Caco-2 (cell line): ENCODE measurements at regions of chr10 and their contacts with region 1.

Region 1: GRCh38 chr10:3740157-3740871 is 44.7 kb downstream of the KLF6 start:
- DNase-seq: peak; percentile 77 to 81
- H3K4me3 ChIP-seq: no peak overlapping the region
- H3K4me3 Mint-ChIP-seq: peak overlapping the region; percentile 44
- H3K27ac Mint-ChIP-seq: peak overlapping the region; percentile 77
- H3K4me1 ChIP-seq: peaks cover 47% of the 10 kb centered on the region
- H3K4me1 Mint-ChIP-seq: peaks cover 47% of the 10 kb centered on the region
- H3K27me3 ChIP-seq: no peaks in the 10 kb centered on the region
- H3K27me3 Mint-ChIP-seq: no peaks in the 10 kb centered on the region
- CTCF ChIP-seq: no peak

Region 2: DNA sequence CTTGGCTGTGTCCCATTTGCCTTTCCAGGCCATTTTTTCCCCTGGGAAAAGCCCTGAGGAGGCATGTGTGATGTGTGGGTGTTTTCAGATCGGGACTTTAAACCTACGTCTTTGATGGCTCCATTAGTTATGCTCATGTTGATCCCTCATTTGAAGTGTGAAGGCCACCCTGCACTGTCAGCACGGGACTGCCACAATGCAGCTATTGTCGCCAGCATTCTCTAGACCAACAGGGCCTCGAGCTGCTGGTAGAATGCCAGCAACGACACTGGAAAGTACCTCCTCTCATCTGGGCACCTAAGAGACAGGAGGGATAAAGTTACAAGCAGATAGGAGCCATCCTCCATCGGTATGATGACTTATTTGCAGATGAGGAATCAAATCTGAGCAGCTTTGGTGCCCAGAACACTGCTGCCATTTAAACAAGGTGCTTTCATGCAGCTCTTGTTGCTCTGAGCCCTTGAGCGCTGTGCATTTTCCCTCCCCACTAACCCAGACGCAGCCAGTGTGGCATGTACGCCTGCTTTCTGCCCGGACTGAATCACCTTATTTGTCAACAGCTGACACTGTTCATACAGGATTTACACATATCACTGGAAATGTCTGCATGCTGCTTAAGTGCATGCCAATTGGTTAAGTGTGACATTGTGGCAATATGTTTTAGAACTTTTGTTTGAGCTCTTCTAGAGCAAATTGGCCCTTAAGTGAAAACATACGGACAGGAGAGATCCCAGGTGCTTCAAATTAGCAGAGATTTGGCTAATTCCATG is 392.7 kb before region 1 on chr10:
- CTCF ChIA-PET with region 1: no interaction called
- POLR2A ChIA-PET with region 1: interaction called, 11 read pairs
- intact Hi-C with region 1: no loop called
- DNase-seq: no peak
- H3K4me3 ChIP-seq: no peak overlapping the region
- H3K4me3 Mint-ChIP-seq: no peak overlapping the region
- H3K27ac Mint-ChIP-seq: no peak overlapping the region
- H3K4me1 ChIP-seq: no peaks in the 10 kb centered on the region
- H3K4me1 Mint-ChIP-seq: peaks cover 6% of the 10 kb centered on the region
- H3K27me3 ChIP-seq: no peaks in the 10 kb centered on the region
- H3K27me3 Mint-ChIP-seq: peaks cover 11% of the 10 kb centered on the region
- CTCF ChIP-seq: no peak

Region 3: DNA sequence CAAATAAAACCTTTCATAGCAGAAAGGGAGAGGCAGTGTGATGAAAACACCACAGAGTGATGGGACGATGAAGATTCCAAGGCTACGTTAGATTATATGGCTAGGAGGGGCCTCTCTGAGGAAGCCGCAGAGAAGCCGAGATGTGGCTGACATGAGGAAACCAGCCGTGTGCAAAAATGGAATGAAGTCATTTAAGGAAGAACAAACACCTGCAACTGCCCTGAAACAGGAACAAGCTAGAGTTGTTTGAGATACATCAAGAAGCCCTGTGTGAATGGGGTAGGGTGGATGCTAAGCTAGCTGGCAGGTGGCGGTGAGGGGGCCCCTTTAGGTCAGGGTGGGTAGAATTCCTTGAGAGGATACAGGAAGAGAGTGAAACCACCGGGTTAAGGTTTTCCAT is 84.8 kb before region 1 on chr10:
- CTCF ChIA-PET with region 1: no interaction called
- POLR2A ChIA-PET with region 1: no interaction called
- intact Hi-C with region 1: loop called (anchors 1 kb)
- DNase-seq: no peak
- H3K4me3 ChIP-seq: no peak overlapping the region
- H3K4me3 Mint-ChIP-seq: no peak overlapping the region
- H3K27ac Mint-ChIP-seq: peak overlapping the region; percentile 7
- H3K4me1 ChIP-seq: peaks cover 22% of the 10 kb centered on the region
- H3K4me1 Mint-ChIP-seq: peaks cover 32% of the 10 kb centered on the region
- H3K27me3 ChIP-seq: no peaks in the 10 kb centered on the region
- H3K27me3 Mint-ChIP-seq: no peaks in the 10 kb centered on the region
- CTCF ChIP-seq: no peak

Region 4: GRCh38 chr10:3676564-3676963 is 63.8 kb before region 1 on chr10:
- CTCF ChIA-PET with region 1: no interaction called
- POLR2A ChIA-PET with region 1: no interaction called
- intact Hi-C with region 1: no loop called
- DNase-seq: no peak
- H3K4me3 ChIP-seq: no peak overlapping the region
- H3K4me3 Mint-ChIP-seq: no peak overlapping the region
- H3K27ac Mint-ChIP-seq: no peak overlapping the region
- H3K4me1 ChIP-seq: no peaks in the 10 kb centered on the region
- H3K4me1 Mint-ChIP-seq: peaks cover 4% of the 10 kb centered on the region
- H3K27me3 ChIP-seq: no peaks in the 10 kb centered on the region
- H3K27me3 Mint-ChIP-seq: no peaks in the 10 kb centered on the region
- CTCF ChIP-seq: no peak

Region 5: DNA sequence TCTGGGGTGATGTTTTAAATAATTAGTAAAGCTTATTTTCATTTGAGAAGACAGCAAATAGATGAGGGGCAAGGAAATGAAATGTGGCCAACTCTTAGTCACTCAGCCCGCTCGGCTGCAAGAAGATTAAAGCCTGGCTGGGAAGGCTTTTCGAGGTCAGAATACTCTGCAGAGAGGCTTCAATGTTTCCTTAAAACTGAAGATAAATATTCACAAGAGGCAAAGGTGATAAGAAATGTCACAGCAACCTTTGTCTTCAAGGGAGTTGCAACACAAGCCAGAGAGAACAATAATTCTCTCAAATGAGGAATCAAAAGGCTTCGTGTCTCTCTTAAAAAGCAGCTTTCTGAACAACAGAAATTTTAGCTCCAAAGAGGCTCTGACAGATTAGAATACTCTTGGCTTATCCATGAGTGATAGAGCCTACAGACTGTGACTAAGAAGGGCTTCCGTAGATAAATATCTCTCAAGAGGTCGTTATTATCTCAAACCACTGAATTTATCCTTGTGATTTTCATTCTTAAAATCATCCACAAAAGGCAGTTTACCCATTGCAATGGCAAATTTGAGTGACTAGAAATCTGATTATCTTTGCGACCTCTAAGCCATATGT is 47.8 kb before region 1 on chr10:
- CTCF ChIA-PET with region 1: no interaction called
- POLR2A ChIA-PET with region 1: no interaction called
- intact Hi-C with region 1: no loop called
- DNase-seq: peak in 1 of 2 experiments; percentile 27
- H3K4me3 ChIP-seq: no peak overlapping the region
- H3K4me3 Mint-ChIP-seq: peak overlapping the region; percentile 22
- H3K27ac Mint-ChIP-seq: peak overlapping the region; percentile 50
- H3K4me1 ChIP-seq: peaks cover 25% of the 10 kb centered on the region
- H3K4me1 Mint-ChIP-seq: peaks cover 15% of the 10 kb centered on the region
- H3K27me3 ChIP-seq: no peaks in the 10 kb centered on the region
- H3K27me3 Mint-ChIP-seq: no peaks in the 10 kb centered on the region
- CTCF ChIP-seq: no peak

Region 6: DNA sequence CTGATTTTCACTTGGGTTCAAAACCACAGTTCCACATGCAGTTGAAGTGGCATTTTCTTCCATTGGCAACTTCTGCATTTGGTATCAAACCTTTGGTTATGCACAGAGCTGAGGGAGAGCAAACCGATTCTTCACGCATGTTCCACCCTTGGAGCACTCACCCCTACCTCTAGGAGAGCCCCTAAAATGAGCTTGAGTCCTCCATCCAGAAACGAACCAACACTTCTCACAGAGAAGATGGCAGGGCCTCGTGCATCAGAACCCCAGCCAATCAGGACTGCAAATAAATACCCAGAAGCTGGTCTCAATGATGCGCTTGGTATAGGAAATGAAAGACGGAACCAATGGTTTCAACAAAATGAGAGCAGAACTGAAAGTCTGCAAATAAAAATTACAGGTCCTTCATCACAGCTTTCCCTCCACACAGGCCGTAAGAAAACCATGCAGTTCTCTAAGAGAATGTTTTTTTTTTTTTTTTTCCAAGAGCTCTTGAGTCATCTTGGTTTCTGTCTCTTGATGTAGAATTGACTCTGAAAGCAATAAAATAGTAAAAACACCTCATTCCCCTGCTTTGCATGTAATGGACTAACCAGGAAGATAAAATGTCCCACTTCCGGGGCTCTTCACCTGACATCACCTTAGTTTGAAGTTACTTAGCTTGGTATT is 20.8 kb after region 1 on chr10:
- CTCF ChIA-PET with region 1: no interaction called
- POLR2A ChIA-PET with region 1: interaction called, 4 read pairs
- intact Hi-C with region 1: loop called (anchors 1 kb)
- DNase-seq: no peak
- H3K4me3 ChIP-seq: no peak overlapping the region
- H3K4me3 Mint-ChIP-seq: peak overlapping the region; percentile 86
- H3K27ac Mint-ChIP-seq: peak overlapping the region; percentile 78
- H3K4me1 ChIP-seq: peaks cover 94% of the 10 kb centered on the region
- H3K4me1 Mint-ChIP-seq: peaks cover 80% of the 10 kb centered on the region
- H3K27me3 ChIP-seq: no peaks in the 10 kb centered on the region
- H3K27me3 Mint-ChIP-seq: no peaks in the 10 kb centered on the region
- CTCF ChIP-seq: no peak

Region 7: GRCh38 chr10:3811291-3811870 is 71.1 kb after region 1 on chr10:
- CTCF ChIA-PET with region 1: no interaction called
- POLR2A ChIA-PET with region 1: interaction called, 6 read pairs
- intact Hi-C with region 1: loop called (anchors 2 kb)
- DNase-seq: no peak
- H3K4me3 ChIP-seq: no peak overlapping the region
- H3K4me3 Mint-ChIP-seq: peak overlapping the region; percentile 20
- H3K27ac Mint-ChIP-seq: peak overlapping the region; percentile 84
- H3K4me1 ChIP-seq: peaks cover 73% of the 10 kb centered on the region
- H3K4me1 Mint-ChIP-seq: peaks cover 67% of the 10 kb centered on the region
- H3K27me3 ChIP-seq: no peaks in the 10 kb centered on the region
- H3K27me3 Mint-ChIP-seq: no peaks in the 10 kb centered on the region
- CTCF ChIP-seq: no peak

Region 8: GRCh38 chr10:3852147-3852904 is 112.0 kb after region 1 on chr10:
- CTCF ChIA-PET with region 1: no interaction called
- POLR2A ChIA-PET with region 1: no interaction called
- intact Hi-C with region 1: loop called (anchors 1 kb)
- DNase-seq: peak; percentile 92 to 95
- H3K4me3 ChIP-seq: no peak overlapping the region
- H3K4me3 Mint-ChIP-seq: peak overlapping the region; percentile 67
- H3K27ac Mint-ChIP-seq: peak overlapping the region; percentile 98
- H3K4me1 ChIP-seq: peaks cover 51% of the 10 kb centered on the region
- H3K4me1 Mint-ChIP-seq: peaks cover 54% of the 10 kb centered on the region
- H3K27me3 ChIP-seq: no peaks in the 10 kb centered on the region
- H3K27me3 Mint-ChIP-seq: no peaks in the 10 kb centered on the region
- CTCF ChIP-seq: no peak

Region 9: DNA sequence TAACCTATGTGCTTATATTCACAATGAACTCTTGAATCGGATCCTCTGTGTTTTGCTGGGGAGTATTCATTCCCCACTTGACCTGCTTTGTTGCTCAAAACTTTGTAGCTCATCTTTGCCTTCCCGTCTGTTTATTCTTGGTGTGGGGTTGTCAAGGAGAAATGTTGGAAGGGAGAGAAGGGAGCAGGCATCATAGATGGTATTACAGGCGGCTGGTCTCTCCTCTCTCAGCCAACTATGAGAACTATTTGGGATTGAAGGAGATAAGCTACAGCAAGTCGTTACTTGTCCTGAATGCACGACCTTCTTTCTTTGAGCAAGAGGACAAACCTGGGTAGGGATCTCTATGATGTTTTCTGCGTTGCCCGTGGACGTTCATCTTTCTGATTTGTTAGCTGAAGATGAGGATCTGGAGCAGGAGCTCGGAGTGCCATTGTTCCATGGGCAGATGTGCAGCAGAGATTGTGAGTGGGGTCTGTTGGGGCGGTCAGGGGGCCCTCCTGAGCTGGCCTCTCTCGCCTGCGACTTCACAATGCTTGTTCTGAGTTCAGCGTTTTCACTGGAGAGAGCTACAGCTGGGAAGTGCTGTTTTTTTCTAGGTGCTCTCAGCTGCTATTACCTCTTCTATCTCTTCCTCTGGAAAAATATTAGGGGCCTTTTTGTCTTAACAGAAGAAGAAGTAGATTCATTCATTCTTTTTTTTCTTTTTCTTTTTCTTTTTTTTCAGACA is 171.6 kb after region 1 on chr10:
- CTCF ChIA-PET with region 1: no interaction called
- POLR2A ChIA-PET with region 1: no interaction called
- intact Hi-C with region 1: no loop called
- DNase-seq: no peak
- H3K4me3 ChIP-seq: no peak overlapping the region
- H3K4me3 Mint-ChIP-seq: peak overlapping the region; percentile 21
- H3K27ac Mint-ChIP-seq: peak overlapping the region; percentile 16
- H3K4me1 ChIP-seq: peaks cover 4% of the 10 kb centered on the region; the same call in 1 of the 2 replicates
- H3K4me1 Mint-ChIP-seq: peaks cover 11% of the 10 kb centered on the region
- H3K27me3 ChIP-seq: no peaks in the 10 kb centered on the region
- H3K27me3 Mint-ChIP-seq: no peaks in the 10 kb centered on the region
- CTCF ChIP-seq: no peak